ENCODE measurements at regions of chr1 and their contacts with region 1.

Region 1: GRCh38 chr1:147640553-147641165 is 29.7 kb downstream of the ACP6 start:
- DNase-seq: peak; percentile 83
- H3K4me3 Mint-ChIP-seq: no peak overlapping the region
- H3K27ac Mint-ChIP-seq: no peak overlapping the region
- H3K4me1 Mint-ChIP-seq: peaks cover 27% of the 10 kb centered on the region
- H3K27me3 Mint-ChIP-seq: no peaks in the 10 kb centered on the region

Region 2: GRCh38 chr1:147384804-147385203 is 255.9 kb before region 1 on chr1:
- CTCF ChIA-PET with region 1: no interaction called
- POLR2A ChIA-PET with region 1: no interaction called
- DNase-seq: no peak
- H3K4me3 Mint-ChIP-seq: no peak overlapping the region
- H3K27ac Mint-ChIP-seq: no peak overlapping the region
- H3K4me1 Mint-ChIP-seq: no peaks in the 10 kb centered on the region
- H3K27me3 Mint-ChIP-seq: peaks cover 16% of the 10 kb centered on the region

Region 3: DNA sequence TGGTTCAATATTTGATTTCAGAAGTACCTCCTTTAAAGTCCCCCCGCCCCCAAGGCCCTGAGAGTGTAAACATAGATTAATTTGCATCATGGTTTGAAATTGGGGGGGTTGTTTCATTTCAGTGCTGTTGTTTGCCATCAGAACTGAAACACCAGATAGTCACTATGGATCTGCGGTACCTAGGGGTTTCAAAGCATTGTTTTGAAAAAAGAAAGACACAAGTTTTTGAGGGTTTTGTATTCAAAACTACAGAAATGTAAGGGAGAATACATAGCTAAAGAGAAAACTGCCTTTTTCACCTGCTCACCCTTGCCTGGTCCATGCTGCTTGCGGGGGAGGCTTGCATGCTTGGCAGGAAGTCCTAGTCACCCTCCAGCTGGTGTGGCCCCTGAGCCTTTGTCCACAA is 29.6 kb before region 1 on chr1:
- CTCF ChIA-PET with region 1: no interaction called
- POLR2A ChIA-PET with region 1: no interaction called
- DNase-seq: no peak
- H3K4me3 Mint-ChIP-seq: no peak overlapping the region
- H3K27ac Mint-ChIP-seq: no peak overlapping the region
- H3K4me1 Mint-ChIP-seq: no peaks in the 10 kb centered on the region
- H3K27me3 Mint-ChIP-seq: no peaks in the 10 kb centered on the region

Region 4: DNA sequence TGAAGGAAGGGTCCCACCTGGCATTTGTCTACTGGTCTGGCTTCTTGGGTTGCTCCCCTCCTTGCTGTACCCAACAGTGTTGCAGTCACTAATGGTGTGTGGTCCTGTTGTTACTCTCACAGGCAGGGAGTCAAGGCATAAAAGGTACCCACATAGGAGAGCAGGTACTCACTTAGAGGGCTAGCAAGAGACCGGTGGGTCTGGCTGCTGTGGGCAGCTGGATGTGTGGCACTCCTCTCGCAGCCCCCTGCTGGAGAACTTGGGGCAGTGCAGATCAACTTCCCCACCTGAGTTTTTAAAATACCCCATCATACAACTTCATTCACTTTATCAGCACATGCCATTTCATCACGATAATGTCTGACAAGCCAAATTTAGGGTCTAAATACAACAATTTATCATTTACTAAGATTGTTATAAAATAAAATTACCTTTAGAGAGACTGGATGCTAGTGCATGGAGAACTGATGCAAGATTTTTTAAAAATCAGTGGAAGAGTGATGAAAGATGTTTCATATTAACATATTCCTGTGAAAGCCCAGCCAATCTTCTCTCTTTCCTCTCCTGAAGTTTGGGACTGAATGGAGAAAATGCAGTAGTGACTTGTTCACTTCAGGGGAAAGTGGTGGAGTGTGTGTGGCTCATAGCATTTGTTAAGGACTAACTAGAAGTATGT is 13.1 kb before region 1 on chr1:
- CTCF ChIA-PET with region 1: interaction called, 27 read pairs
- POLR2A ChIA-PET with region 1: no interaction called
- DNase-seq: peak; percentile 61
- H3K4me3 Mint-ChIP-seq: no peak overlapping the region
- H3K27ac Mint-ChIP-seq: no peak overlapping the region
- H3K4me1 Mint-ChIP-seq: peaks cover 22% of the 10 kb centered on the region
- H3K27me3 Mint-ChIP-seq: no peaks in the 10 kb centered on the region